Activated naive CD8-positive, alpha-beta T cell treated with anti-CD3 and anti-CD28 coated beads, Interleukin-2, amount 10 ng/mL, durations not matched to agents 7 days and 5 days (primary cell): ENCODE measurements at regions of chr10 and their contacts with region 1.

Region 1: GRCh38 chr10:6050801-6051445 is 11.2 kb downstream of the IL2RA start:
- DNase-seq: peak; percentile 88
- ATAC-seq: peak; percentile 73
- H3K4me3 Mint-ChIP-seq: peak overlapping the region; percentile 88
- H3K27ac Mint-ChIP-seq: peak overlapping the region; percentile 94
- H3K4me1 Mint-ChIP-seq: peaks cover 76% of the 10 kb centered on the region
- H3K27me3 Mint-ChIP-seq: no peaks in the 10 kb centered on the region

Region 2: DNA sequence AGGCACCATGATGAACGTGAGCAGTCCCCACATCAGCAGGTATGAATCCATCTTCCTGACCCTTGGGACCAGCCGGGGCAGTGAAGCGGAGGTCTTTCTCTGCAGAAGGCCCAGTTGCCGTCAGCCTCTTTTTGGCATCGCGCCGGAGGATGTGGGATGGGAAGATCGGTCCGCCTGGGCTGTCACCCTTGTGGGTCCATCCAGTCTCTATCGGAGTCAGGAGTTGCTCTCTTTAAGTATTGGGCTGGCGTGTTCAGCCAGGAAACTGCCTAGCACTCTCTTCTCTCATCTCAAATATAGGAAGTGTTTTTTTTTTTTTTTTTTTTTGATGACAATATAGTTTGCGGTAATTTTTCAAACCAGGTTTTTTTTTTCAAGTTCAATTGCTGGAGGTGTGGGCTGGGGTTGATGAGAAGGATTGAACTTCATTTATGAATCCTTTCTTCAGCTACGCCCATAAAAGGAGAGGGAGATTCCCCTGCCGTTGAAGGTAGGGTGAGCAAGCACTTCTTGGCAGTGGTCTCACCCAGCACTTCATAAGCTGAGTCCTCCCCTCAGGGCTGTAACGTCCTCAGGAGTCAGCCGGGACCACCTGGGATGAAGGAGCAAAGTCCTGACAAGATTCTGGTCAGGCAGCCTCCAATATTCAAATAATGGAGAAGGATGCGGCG is 11.3 kb after region 1 on chr10 and contains the start of gene IL2RA:
- POLR2A ChIA-PET with region 1: interaction called, 73 read pairs
- DNase-seq: peak; percentile 73
- ATAC-seq: peak; percentile 75
- H3K4me3 Mint-ChIP-seq: peak within 1 kb of the TSS; percentile 91
- H3K27ac Mint-ChIP-seq: peak within 1 kb of the TSS; percentile 92
- H3K4me1 Mint-ChIP-seq: peaks cover 65% of the 10 kb centered on the region
- H3K27me3 Mint-ChIP-seq: no peaks in the 10 kb centered on the region
- total RNA-seq, gene IL2RA: 184 to 201 TPM

Region 3: GRCh38 chr10:6068422-6068821 is 17.5 kb after region 1 on chr10:
- POLR2A ChIA-PET with region 1: interaction called, 73 read pairs
- DNase-seq: no peak
- ATAC-seq: peak; percentile 78
- H3K4me3 Mint-ChIP-seq: peak overlapping the region; percentile 85
- H3K27ac Mint-ChIP-seq: peak overlapping the region; percentile 93
- H3K4me1 Mint-ChIP-seq: peaks cover 93% of the 10 kb centered on the region
- H3K27me3 Mint-ChIP-seq: no peaks in the 10 kb centered on the region

Region 4: GRCh38 chr10:6083523-6084475 is 32.9 kb after region 1 on chr10:
- POLR2A ChIA-PET with region 1: interaction called, 22 read pairs
- DNase-seq: no peak
- ATAC-seq: peak; percentile 60
- H3K4me3 Mint-ChIP-seq: peak overlapping the region; percentile 79
- H3K27ac Mint-ChIP-seq: peak overlapping the region; percentile 89
- H3K4me1 Mint-ChIP-seq: peaks cover 56% of the 10 kb centered on the region
- H3K27me3 Mint-ChIP-seq: no peaks in the 10 kb centered on the region

Region 5: DNA sequence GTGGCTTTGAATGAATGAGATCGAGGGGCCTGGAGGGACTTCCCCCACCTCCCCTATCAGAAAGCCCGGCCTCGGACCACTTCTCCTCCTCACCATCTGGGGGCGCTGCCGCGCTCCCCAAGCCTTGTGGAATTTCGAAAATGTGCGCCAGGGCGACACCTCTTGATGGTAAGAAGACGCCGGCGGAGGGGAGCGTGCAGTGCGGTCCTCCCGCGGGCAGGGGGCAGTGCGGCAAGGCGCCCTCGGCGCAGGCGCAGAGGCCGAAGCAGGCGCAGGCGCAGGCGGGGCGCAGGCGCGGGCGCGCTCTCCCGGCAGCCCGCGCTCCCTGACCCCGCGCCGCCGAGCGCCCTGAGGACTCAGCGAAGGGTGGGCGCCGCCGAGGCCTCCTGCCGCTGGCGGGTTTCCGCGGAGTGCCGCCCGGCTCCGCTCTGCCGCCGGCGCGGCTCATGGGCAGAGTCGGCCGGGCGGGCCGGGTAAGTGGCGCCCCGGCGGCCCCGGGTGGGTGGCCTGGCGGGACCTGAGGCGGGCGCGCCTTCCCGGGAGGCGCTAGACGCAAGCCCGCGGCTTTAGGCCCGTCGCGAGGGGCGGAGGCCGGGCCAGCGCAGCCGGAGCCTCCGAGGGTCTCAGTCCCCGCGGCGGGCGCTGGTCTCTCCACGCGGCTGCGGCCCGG is 37.9 kb after region 1 on chr10 and contains the start of gene RBM17:
- POLR2A ChIA-PET with region 1: interaction called, 22 read pairs
- DNase-seq: peak; percentile 100
- ATAC-seq: peak; percentile 84
- H3K4me3 Mint-ChIP-seq: peak within 1 kb of the TSS; percentile 94
- H3K27ac Mint-ChIP-seq: peak within 1 kb of the TSS; percentile 93
- H3K4me1 Mint-ChIP-seq: peaks cover 61% of the 10 kb centered on the region
- H3K27me3 Mint-ChIP-seq: no peaks in the 10 kb centered on the region
- total RNA-seq, gene RBM17: 185 to 200 TPM

Region 6: GRCh38 chr10:6300106-6300783 is 249.3 kb after region 1 on chr10:
- POLR2A ChIA-PET with region 1: no interaction called
- DNase-seq: peak; percentile 45
- ATAC-seq: peak; percentile 87
- H3K4me3 Mint-ChIP-seq: peak overlapping the region; percentile 71
- H3K27ac Mint-ChIP-seq: peak overlapping the region; percentile 89
- H3K4me1 Mint-ChIP-seq: peaks cover 51% of the 10 kb centered on the region
- H3K27me3 Mint-ChIP-seq: no peaks in the 10 kb centered on the region